GM13977 (cell line): ENCODE measurements at regions of chr13 and their contacts with region 1.

Region 1: DNA sequence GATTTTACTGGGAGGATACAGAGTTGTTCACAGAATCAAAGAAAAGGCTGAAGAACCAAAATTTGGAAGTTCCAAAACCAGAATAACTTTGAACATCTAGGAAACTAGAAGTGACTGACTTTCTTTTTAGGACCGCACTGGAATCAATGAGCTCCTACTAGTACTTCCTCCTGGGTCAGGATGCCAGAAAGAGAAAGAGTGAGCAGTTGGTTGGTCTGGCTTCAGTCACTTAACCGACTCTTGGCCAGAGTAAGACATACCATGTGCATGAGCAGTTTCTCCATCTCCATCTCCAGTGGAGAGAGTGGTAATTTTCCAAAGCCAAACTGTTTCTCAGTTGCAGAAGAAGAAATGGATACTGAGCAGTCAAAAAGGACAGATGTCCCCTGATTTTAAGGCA is 27.1 kb upstream of the MTUS2 start:
- DNase-seq: no peak
- CTCF ChIP-seq: no peak

Region 2: GRCh38 chr13:28329395-28330158 is 463.4 kb before region 1 on chr13:
- in situ Hi-C with region 1: loop called (anchors 25 kb)
- DNase-seq: no peak
- CTCF ChIP-seq: no peak